Mammary epithelial cell (primary cell): ENCODE measurements at regions of chr22 and their contacts with region 1.

Region 1: DNA sequence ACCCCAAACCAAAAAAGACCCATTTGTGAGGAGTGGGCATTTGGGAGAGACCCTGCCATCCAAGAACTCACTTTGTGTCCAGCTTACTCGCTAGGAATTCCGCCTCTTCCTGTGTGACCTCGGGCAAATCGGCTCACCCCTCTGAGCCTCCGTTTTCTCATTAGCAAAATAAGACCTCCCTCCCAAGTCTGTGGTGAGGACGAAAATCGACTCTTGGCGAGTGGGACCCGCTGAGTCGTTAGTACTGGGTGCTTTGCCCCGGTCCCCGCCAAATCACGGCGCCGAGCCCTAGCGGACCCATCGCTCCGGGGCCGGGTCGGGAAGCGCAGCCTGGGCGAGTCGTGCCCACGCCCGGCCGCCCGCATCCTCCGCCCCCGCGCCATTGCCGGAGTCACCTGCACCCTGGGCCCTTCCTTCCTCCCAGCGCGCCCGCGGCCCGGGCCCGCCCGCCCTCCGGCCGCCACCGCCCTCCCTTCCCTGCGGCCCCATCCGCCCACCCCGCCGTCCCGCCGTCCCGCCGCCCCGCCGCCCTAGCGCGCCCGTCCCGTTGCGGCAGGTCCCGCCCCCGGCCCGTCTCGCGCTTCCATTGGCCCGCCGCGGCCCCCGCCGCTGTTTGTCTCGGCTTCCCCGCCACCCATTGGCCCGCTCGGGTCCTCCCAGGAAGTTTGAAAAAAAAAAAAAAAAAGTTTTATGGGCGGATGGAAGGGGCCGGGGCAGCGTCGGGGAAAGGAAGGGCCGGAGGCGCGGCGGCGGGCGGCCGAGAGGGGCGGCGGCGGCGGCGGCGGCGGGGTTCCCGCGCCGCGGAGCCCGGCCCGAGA is 48.9 kb downstream of the TRIOBP start:
- DNase-seq: peak; percentile 85
- H3K4me3 ChIP-seq: peak overlapping the region; percentile 73 to 94 (median 75)
- H3K27ac ChIP-seq: peak overlapping the region; percentile 72
- H3K4me1 ChIP-seq: peaks cover 74% of the 10 kb centered on the region
- H3K27me3 ChIP-seq: no peaks in the 10 kb centered on the region
- CTCF ChIP-seq: no peak

Region 2: DNA sequence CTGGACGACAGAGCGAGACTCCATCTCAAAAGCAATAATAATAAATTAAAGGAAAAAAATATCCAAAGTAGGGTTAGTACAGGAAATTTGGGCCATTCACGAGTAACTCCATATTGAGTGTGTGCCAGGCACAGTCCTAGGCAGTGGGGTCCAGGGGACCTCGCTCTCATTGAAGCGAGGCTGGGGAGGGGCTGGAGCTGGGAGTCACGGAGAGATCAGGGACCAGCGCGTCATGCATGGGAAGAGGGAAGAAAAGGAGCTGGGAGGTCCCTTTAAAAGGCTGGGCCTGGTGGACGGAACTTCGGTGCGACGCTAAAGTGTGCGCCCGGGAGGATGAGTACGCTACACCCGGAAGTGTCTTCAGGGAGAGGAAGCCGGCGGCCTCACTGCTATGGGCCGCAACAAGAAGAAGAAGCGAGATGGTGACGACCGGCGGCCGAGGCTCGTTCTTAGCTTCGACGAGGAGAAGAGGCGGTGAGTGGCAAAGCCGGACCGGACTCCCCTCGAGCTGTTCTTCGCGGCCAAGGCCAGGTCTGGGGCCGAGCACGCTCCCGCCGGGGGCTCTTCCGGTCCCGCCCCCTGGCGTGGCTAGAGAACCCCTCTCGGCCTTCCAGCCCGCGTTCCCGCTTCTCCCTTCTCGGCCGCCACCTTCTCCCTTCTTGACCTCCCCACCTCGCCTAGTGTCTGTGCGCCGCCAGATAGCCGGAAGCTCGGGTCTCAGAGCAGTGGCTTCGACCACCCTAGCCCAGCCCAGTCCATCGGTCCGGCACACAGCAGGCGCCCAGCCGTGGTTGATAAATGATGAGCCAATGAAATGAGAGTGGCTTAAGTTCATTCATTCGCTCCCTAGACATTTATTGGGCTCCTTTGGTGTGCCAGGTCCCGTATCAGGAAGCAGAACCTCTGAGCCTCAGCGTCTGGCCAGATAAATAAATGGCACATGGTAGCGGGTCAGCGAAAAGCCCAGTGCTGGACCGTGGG is 59.5 kb before region 1 on chr22 and contains the start of gene NOL12:
- CTCF ChIA-PET with region 1: interaction called, 5 read pairs
- dilution Hi-C with region 1: no loop called
- in situ Hi-C with region 1: loop called in 1 of 2 experiments (anchors 5 kb)
- intact Hi-C with region 1: loop called (anchors 2 kb)
- DNase-seq: peak; percentile 86
- H3K4me3 ChIP-seq: peak within 1 kb of the TSS; percentile 88 to 97 (median 91)
- H3K27ac ChIP-seq: peak within 1 kb of the TSS; percentile 77
- H3K4me1 ChIP-seq: peaks cover 44% of the 10 kb centered on the region
- H3K27me3 ChIP-seq: no peaks in the 10 kb centered on the region
- CTCF ChIP-seq: no peak
- total RNA-seq, gene NOL12: 8.0 to 32.4 TPM

Region 3: GRCh38 chr22:37696657-37697537 is 48.9 kb before region 1 on chr22 and contains the start of gene TRIOBP:
- CTCF ChIA-PET with region 1: no interaction called
- dilution Hi-C with region 1: loop called (anchors 5 kb)
- in situ Hi-C with region 1: no loop called
- intact Hi-C with region 1: no loop called
- DNase-seq: peak; percentile 68
- H3K4me3 ChIP-seq: peak within 1 kb of the TSS in 1 of 3 experiments; percentile 7
- H3K27ac ChIP-seq: no peak within 1 kb of the TSS
- H3K4me1 ChIP-seq: peaks cover 9% of the 10 kb centered on the region
- H3K27me3 ChIP-seq: no peaks in the 10 kb centered on the region
- CTCF ChIP-seq: peak in 1 of 2 donors; percentile 46
- total RNA-seq, gene TRIOBP: 117 to 138 TPM

Region 4: GRCh38 chr22:37777122-37777687 is 31.4 kb after region 1 on chr22:
- CTCF ChIA-PET with region 1: interaction called, 5 read pairs
- dilution Hi-C with region 1: no loop called
- in situ Hi-C with region 1: no loop called
- intact Hi-C with region 1: loop called (anchors 5 kb)
- DNase-seq: peak; percentile 99
- H3K4me3 ChIP-seq: no peak overlapping the region
- H3K27ac ChIP-seq: peak overlapping the region; percentile 99
- H3K4me1 ChIP-seq: peaks cover 40% of the 10 kb centered on the region
- H3K27me3 ChIP-seq: no peaks in the 10 kb centered on the region
- CTCF ChIP-seq: no peak

Region 5: GRCh38 chr22:37784829-37785493 is 39.2 kb after region 1 on chr22:
- CTCF ChIA-PET with region 1: interaction called, 5 read pairs
- dilution Hi-C with region 1: loop called (anchors 5 kb)
- in situ Hi-C with region 1: no loop called
- intact Hi-C with region 1: no loop called
- DNase-seq: peak; percentile 60
- H3K4me3 ChIP-seq: no peak overlapping the region
- H3K27ac ChIP-seq: no peak overlapping the region
- H3K4me1 ChIP-seq: peaks cover 22% of the 10 kb centered on the region
- H3K27me3 ChIP-seq: no peaks in the 10 kb centered on the region
- CTCF ChIP-seq: no peak

Region 6: GRCh38 chr22:38335077-38335476 is 589.3 kb after region 1 on chr22:
- CTCF ChIA-PET with region 1: no interaction called
- dilution Hi-C with region 1: no loop called
- in situ Hi-C with region 1: no loop called
- intact Hi-C with region 1: no loop called
- DNase-seq: peak; percentile 43
- H3K4me3 ChIP-seq: no peak overlapping the region
- H3K27ac ChIP-seq: no peak overlapping the region
- H3K4me1 ChIP-seq: peaks cover 4% of the 10 kb centered on the region
- H3K27me3 ChIP-seq: no peaks in the 10 kb centered on the region
- CTCF ChIP-seq: no peak